WTC11 (cell line): ENCODE measurements at regions of chr12 and their contacts with region 1.

Region 1: DNA sequence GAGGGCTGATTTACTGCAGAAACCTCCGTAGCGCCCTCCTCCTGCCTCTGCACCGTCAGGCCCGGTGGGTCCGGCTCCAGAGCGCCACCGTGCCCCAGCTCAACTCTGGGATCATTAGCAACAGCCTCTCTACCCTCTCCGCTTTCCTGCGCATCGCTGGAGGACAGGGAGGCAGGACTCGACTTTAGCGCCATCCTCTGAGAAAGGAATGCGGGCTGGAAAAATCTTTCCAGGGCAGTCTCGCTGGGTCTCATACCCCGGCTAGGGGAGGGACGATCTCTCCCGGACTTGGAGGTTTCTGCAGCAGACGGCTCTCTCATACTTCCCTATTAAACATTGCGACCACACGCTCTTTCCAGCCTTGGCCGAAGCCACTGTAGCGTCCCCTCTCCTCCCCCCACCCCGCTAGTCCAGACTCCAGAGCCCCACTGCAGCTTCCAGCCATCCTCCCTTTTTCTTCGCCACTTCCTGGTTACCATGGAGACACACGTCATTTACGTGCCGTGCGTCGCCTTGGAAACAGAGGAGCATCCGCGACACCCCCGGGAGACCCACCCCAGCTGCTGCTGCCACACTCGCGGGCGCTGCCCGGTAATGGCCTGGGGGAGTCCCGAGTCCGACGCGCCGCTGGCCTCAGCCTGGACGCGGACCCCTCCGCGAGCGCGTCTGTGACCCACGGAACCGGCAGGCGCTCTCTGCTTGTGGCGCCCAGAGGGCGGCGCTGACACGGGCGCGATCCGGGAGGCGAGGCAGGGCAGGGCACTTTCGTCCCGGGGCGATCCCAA is at the start of gene CCDC184:
- DNase-seq: peak; percentile 74
- ATAC-seq: peak; percentile 85
- H3K4me3 Mint-ChIP-seq: peak within 1 kb of the TSS; percentile 81
- H3K27ac Mint-ChIP-seq: peak within 1 kb of the TSS; percentile 51
- H3K4me1 Mint-ChIP-seq: peaks cover 29% of the 10 kb centered on the region
- H3K27me3 Mint-ChIP-seq: peaks cover 99% of the 10 kb centered on the region
- CTCF ChIP-seq: no peak
- total RNA-seq, gene CCDC184: 1.4 to 1.6 TPM (median 1.5 TPM) in 3 replicates

Region 2: DNA sequence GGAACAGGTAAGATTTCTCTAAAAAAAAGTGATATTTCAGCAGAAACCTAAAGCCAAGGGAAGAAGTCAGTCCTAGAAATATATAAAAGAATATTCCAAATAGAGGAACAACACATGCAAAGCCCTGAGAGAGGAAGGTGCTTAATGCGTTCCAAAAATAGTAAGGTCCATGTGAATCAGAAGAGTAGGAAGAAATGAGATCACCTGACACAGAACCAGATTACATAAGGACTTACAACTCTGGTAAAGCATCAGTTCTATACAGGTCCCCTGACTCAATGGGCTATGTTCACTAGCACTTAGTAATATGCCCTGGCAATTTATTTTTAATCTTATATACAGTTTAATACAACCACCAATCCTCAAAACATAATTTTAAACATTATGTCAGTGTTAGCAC is 107.5 kb before region 1 on chr12:
- CTCF ChIA-PET with region 1: no interaction called
- POLR2A ChIA-PET with region 1: no interaction called
- DNase-seq: no peak
- ATAC-seq: no peak
- H3K4me3 Mint-ChIP-seq: no peak overlapping the region
- H3K27ac Mint-ChIP-seq: no peak overlapping the region
- H3K4me1 Mint-ChIP-seq: no peaks in the 10 kb centered on the region
- H3K27me3 Mint-ChIP-seq: no peaks in the 10 kb centered on the region
- CTCF ChIP-seq: no peak

Region 3: DNA sequence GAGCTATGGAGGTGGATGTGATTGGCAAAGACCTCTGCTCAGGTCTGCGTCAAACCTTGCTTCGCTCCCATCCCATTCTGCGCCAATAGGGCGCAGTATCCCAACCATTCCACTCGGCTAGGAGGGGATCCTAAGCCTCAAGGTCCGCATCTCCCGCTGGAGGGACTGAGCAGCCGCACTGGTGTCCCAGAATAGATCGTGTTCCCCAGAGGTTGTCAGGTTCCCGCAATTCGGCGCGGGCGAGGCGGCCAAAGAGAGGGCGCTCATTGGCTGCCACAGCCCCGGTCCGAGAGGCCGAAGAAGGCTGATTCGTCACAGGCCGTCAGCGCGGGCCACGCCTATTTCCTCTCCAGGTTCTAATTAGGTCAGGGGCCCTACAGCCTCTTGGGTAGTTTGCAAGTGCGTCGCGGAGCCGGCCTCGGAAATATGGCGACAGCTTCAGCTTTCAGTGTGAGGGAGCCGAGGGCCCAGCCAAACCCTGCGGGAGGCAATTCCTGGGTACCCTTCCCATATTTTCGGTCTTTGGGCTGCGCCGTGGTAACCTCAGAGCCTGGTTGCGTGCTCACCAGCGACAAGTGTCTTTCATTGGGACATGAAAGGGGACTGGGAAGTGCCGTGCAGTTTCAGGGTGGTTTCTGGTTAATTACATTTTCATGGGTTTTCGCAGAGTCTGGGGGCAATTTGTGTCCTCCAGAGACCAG is 14.8 kb after region 1 on chr12:
- CTCF ChIA-PET with region 1: interaction called, 25 read pairs
- POLR2A ChIA-PET with region 1: interaction called, 3 read pairs
- DNase-seq: peak; percentile 97
- ATAC-seq: peak; percentile 96
- H3K4me3 Mint-ChIP-seq: peak overlapping the region; percentile 78
- H3K27ac Mint-ChIP-seq: peak overlapping the region; percentile 97
- H3K4me1 Mint-ChIP-seq: 0 out of 2 replicates have a peak, but pooled peaks cover 7% of the 10 kb centered on the region
- H3K27me3 Mint-ChIP-seq: peaks cover 78% of the 10 kb centered on the region
- CTCF ChIP-seq: no peak

Region 4: GRCh38 chr12:48263617-48264016 is 80.3 kb after region 1 on chr12:
- CTCF ChIA-PET with region 1: no interaction called
- POLR2A ChIA-PET with region 1: no interaction called
- DNase-seq: no peak
- ATAC-seq: no peak
- H3K4me3 Mint-ChIP-seq: no peak overlapping the region
- H3K27ac Mint-ChIP-seq: no peak overlapping the region
- H3K4me1 Mint-ChIP-seq: no peaks in the 10 kb centered on the region
- H3K27me3 Mint-ChIP-seq: peaks cover 56% of the 10 kb centered on the region
- CTCF ChIP-seq: no peak

Region 5: GRCh38 chr12:48903982-48904411 is 720.7 kb after region 1 on chr12:
- CTCF ChIA-PET with region 1: no interaction called
- POLR2A ChIA-PET with region 1: no interaction called
- DNase-seq: peak; percentile 92
- ATAC-seq: peak; percentile 100
- H3K4me3 Mint-ChIP-seq: peak overlapping the region; percentile 65
- H3K27ac Mint-ChIP-seq: no peak overlapping the region
- H3K4me1 Mint-ChIP-seq: 0 out of 2 replicates have a peak, but pooled peaks cover 3% of the 10 kb centered on the region
- H3K27me3 Mint-ChIP-seq: peaks cover 14% of the 10 kb centered on the region
- CTCF ChIP-seq: peak; percentile 45; the same call in 1 of the 2 replicates